Posterior vena cava (tissue), 2 donors: ENCODE measurements at regions of chrX and their contacts with region 1.

Region 1: DNA sequence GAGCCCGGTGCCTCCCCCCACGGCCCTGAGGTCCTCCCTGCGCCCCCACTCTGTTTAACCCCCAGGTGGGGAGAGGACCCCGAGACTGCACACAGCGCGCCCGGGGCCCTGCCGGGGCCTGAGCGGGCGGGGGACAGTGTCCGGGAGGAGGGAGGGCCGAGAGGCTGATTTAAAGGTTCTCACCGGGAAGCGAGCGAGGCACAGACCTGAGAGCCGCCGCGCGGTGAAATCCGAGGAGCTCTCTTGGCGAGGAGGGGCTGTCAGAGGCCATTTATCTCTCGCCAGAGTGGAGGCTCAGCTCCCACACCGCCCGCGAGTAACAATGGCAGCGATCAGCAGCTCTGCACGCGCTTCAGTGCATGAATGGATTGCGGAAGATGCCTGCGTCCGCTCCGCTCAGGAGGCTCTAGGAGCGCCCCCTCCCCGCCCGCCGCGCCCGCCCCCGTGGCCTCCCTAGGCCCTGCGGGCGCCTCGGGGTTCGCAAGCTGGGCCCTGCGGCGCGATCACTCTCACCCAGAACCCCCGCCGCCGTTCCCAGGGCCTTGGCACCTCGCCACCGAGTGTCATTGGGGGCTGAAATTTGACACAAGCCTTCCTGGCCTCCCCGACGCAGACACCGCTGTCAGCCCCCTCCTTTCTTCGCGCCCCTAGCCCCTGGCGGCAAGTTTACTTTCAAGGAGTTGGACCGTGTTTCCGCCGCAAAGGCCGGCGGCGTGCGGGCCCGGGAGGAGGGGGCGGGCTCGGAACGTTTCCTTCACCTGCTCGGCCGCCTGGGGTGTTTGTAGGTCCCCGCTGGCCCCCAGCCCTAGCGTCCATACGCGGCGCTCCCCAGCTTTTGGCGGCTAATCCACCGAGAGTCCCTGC is 48.7 kb upstream of the BCOR start:
- DNase-seq: peak; percentile 85

Region 2: DNA sequence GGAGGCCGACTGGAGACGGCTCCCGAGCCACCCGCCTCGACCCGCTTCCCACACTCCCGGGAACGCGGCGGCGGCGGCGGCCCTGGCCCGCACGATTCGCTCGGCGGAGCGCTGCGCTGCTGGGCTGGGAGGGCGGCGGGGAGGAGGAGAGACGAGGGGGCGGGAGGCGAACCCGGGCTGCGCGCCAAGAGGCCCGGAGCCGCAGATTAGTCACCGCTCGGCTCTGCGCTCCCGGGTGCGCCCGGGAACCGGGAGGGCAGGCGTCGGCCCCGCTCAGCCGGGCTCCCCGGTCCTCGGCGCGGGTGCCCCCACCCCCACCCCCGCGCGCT is 37.6 kb before region 1 on chrX:
- intact Hi-C with region 1: loop called (anchors 5 to 10 kb)
- DNase-seq: peak; percentile 92